ENCODE measurements at regions of chr1 and their contacts with region 1.

Region 1: DNA sequence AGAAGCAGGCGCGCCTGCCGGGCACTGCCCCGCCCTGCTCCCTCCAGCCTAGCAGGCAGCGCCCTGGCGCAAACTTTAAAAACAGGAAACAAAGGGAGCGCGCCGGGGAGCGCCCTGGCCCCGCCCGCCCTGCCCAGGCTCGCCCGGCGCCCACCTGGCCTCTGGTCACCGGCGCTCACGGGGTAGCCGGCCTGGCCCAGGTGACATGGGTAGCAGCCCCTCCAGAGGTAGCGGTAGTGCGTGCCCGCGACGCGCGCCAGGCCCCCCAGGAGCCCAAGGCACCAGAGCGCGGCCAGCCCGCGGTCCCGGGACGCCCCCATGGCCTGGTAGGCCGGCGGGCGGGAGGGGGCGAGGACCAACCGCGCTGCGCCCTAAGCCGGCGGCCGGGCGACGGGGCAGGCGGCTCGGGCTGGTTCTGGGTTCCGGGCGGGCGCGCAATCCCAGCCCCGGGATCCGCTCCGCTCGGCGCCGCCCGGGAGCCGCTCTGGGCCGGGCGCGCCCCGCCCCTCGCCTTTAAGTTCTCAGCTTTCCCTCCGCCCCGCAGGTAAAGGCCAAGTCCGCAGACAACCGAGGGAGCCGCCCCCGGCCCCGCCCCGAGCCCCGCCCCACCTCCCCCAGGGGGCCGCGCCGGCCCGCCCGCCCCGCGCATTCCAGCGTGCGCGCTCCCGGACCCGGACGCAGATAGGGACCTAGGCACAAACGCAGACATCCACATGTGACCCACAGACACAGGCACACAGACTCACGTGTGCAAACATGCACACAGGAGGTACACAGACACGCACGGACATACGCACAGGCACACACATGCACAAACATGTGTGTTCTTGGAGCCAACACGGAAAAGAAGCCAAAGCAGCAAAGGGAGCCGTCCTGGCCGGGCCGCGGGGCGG is 76.7 kb downstream of the ARHGEF16 start:
- DNase-seq: no peak
- H3K4me3 ChIP-seq: peak overlapping the region; percentile 53
- H3K27me3 ChIP-seq: no peaks in the 10 kb centered on the region
- CTCF ChIP-seq: no peak

Region 2: DNA sequence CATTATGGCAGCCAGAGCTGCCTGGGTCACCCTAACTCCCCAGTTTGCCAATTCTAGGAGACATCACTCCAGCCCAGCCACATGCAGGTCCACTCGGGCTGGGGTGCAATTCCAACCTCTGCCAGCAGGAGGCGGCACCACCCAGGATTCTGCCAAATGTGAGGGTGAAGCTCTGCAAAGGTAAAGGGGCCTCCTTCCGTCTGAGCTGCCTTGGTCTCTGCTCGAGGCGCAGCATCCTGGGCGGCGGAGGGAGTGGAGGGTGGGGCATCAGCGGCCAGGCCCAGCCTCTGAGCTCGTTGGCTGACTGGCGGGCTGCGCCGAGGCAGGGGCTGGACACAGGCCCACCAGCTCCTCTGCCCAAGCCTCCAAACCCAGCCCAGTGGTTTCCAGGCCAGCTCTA is 12.9 kb before region 1 on chr1:
- CTCF ChIA-PET with region 1: interaction called, 20 read pairs
- POLR2A ChIA-PET with region 1: no interaction called
- DNase-seq: no peak
- H3K4me3 ChIP-seq: no peak overlapping the region
- H3K27me3 ChIP-seq: no peaks in the 10 kb centered on the region
- CTCF ChIP-seq: peak; percentile 90

Measured in BJ (cell line).